Activated CD8-positive, alpha-beta T cell treated with anti-CD3 and anti-CD28 coated beads, Interleukin-2, amount 10 ng/mL, durations not matched to agents 7 days and 5 days (primary cell): ENCODE measurements at regions of chr9 and their contacts with region 1.

Region 1: DNA sequence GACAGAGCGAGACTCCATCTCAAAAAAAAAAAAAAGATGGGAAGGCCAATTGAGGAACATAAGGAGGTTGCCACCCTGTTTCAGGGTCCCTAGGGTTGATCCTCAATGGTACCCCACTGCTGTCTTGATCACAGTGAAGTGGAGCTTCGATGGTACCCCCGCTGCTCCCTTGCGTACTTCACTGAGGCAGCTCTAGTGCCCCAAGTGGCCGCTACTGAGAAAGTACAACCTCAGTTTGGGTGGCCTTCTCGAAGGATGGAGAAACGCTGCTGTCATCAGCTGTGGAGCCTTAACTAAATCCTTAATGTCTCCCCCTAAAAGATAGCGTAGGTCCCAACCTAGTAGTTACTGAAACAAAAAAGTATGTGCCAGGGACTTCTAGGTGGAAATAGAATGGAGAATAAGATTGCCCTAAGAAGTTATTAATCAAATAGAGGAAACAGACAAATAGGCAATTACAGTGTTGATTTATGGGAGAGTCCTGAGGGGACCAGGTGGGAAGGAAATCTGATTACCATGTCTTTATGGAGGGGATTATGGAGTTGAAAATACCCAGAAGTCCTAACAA is 6.3 kb downstream of the TESK1 start:
- DNase-seq: peak; percentile 73
- ATAC-seq: peak; percentile 87
- H3K4me3 Mint-ChIP-seq: no peak overlapping the region
- H3K27ac Mint-ChIP-seq: no peak overlapping the region
- H3K4me1 Mint-ChIP-seq: peaks cover 30% of the 10 kb centered on the region
- H3K27me3 Mint-ChIP-seq: no peaks in the 10 kb centered on the region

Region 2: DNA sequence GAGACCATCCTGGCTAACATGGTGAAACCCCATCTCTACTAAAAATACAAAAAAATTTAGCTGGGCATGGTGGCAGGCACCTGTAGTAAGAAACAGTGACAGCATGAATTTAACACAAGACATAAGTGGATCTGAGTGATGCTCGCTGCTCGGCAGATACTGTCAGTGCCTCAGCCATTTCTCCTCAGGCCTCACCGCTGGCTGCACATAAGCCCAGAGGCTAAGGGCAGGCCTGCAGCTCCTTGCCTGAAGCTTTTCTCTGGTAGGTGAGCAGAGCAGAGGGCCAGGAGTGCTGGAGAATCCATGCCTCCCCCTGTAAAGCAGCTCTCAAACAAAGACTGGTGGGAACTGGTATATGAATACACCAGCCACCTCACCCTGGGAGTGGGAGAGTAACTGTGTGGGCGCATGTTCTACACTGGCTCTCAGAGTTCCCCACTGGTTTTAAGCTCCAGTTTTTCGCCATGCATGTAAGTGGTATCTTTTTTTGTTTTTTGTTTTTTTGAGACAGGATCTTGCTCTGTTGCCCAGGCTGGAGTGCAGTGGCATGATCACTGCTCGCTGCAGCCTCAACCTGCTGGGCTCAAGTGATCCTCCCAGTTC is 17.2 kb after region 1 on chr9:
- CTCF ChIA-PET with region 1: interaction called, 12 read pairs
- POLR2A ChIA-PET with region 1: no interaction called
- DNase-seq: no peak
- ATAC-seq: no peak
- H3K4me3 Mint-ChIP-seq: no peak overlapping the region
- H3K27ac Mint-ChIP-seq: no peak overlapping the region
- H3K4me1 Mint-ChIP-seq: peaks cover 16% of the 10 kb centered on the region
- H3K27me3 Mint-ChIP-seq: no peaks in the 10 kb centered on the region

Region 3: GRCh38 chr9:35636135-35636876 is 25.0 kb after region 1 on chr9:
- CTCF ChIA-PET with region 1: interaction called, 37 read pairs
- POLR2A ChIA-PET with region 1: interaction called, 5 read pairs
- DNase-seq: no peak
- ATAC-seq: no peak
- H3K4me3 Mint-ChIP-seq: no peak overlapping the region
- H3K27ac Mint-ChIP-seq: no peak overlapping the region
- H3K4me1 Mint-ChIP-seq: peaks cover 56% of the 10 kb centered on the region
- H3K27me3 Mint-ChIP-seq: no peaks in the 10 kb centered on the region

Region 4: DNA sequence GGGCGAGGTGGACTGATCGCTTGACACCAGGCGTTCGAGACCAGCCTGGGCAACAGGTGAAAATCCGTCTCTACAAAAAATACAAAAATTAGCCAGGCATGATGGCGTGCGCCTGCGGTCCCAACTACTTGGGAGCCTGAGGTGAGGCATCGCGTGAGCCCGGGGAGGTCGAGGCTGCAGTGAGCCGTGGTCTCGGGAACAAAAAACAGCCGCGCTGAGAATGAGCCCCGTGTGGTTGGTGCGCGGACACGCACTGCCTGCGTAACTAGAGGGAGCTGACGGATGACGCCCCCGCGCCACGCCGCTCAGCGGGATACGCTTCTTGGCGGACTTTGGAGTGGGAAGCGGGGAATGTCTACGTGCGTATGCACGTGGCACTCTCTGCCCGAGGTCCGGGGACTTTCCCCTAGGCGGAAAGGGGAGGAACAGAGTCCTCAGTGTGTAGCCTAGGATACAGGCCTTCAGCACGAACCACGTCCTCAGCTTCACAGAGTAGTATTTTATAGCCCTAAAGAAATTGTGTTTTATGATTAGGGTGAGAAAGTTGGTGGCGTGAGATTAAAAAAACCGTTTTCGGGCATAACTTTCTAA is 46.3 kb after region 1 on chr9 and contains the start of gene RMRP:
- CTCF ChIA-PET with region 1: interaction called, 272 read pairs
- POLR2A ChIA-PET with region 1: interaction called, 6 read pairs
- DNase-seq: peak; percentile 94
- ATAC-seq: peak; percentile 92
- H3K4me3 Mint-ChIP-seq: peak within 1 kb of the TSS; percentile 92
- H3K27ac Mint-ChIP-seq: peak within 1 kb of the TSS; percentile 97
- H3K4me1 Mint-ChIP-seq: peaks cover 62% of the 10 kb centered on the region
- H3K27me3 Mint-ChIP-seq: peaks cover 3% of the 10 kb centered on the region
- total RNA-seq, gene RMRP: 7,126 to 12,592 TPM

Region 5: DNA sequence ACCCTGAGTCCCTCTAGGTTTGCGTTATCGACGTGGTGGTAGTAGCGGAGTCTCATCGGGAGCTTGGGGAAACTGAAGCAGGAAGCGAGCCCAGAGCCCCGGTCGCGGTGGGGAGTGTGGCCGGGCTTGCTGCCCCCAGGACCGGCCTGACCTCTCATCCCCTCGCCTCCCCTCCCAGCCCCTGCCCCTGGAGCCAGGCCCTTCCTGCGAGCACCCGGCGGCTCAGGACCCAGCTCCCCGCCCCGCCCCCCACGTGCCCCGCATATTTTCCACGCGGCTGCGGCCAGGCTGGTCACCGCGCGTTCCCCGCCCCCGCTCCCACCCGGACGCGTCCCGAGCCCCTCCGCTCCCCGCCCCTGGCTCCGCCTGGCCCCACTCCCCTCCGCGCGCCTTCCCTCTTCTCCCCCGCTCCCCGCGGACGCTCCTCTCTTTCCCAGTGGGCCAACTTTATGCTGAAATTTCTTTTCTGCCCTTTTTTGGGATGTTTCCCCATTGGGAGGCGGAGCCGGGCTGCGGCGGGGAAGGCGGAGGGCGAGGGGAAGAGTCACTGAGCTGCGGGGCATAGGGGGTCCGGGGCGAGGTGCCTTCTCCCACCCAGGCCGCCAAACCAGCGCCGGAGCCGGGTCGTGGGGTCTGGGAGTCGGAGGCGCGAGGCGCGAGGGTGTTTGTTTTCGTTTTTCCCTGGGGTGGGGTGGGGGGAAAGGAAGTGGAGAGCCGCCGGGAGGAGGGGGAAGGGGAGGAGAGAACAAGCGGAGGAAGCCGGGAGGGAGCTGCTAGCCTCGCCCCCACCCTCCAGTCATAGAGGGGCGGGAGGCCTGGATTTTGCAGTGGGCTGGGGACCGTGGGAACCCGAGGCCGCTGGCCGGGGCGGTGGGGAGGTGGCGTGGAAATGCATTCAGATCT is 79.4 kb after region 1 on chr9:
- CTCF ChIA-PET with region 1: interaction called, 52 read pairs
- POLR2A ChIA-PET with region 1: no interaction called
- DNase-seq: peak; percentile 39
- ATAC-seq: peak; percentile 63
- H3K4me3 Mint-ChIP-seq: peak overlapping the region; percentile 77
- H3K27ac Mint-ChIP-seq: peak overlapping the region; percentile 67
- H3K4me1 Mint-ChIP-seq: peaks cover 34% of the 10 kb centered on the region
- H3K27me3 Mint-ChIP-seq: no peaks in the 10 kb centered on the region

Region 6: DNA sequence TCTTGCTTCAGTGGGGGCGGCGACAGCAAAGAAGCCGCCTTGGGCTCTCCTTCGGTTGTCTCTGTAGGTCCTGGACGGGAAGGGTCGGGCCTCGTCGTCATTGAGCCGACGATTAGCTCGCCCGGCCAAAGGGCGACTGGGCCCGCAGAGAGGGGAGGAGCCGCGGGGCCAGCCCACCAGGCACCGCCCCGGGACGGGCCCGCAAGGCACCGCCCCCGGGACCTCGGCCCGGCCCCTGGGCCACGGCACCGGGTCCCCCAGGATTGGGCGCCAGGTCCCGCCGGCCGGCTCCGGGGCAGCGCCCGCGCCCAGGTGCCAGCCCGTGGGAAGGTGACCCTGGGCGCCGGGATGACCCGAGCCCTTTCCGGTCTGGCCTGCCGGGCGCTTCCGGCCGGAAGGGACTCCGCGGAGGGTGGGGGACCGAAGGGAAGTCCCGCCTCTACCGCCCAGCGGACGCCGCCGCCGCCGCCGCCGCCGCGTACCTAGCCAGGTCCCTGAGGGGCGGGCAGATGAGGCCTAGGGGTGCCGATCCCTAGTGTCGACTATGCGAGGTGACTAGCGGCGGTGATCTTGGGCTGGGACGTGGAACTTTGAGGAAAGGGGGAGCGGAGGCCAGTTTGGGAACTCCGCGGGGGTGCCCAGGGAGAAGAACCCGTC is 137.7 kb after region 1 on chr9 and contains the starts of genes GBA2 and RGP1:
- CTCF ChIA-PET with region 1: interaction called, 10 read pairs
- POLR2A ChIA-PET with region 1: interaction called, 3 read pairs
- DNase-seq: peak; percentile 78
- ATAC-seq: peak; percentile 83
- H3K4me3 Mint-ChIP-seq: peak within 1 kb of the TSS; percentile 90
- H3K27ac Mint-ChIP-seq: peak within 1 kb of the TSS; percentile 87
- H3K4me1 Mint-ChIP-seq: peaks cover 39% of the 10 kb centered on the region
- H3K27me3 Mint-ChIP-seq: no peaks in the 10 kb centered on the region
- total RNA-seq, gene GBA2: 52.6 to 56.4 TPM
- total RNA-seq, gene RGP1: 22.1 to 22.9 TPM

Region 7: GRCh38 chr9:36064448-36065037 is 453.2 kb after region 1 on chr9:
- CTCF ChIA-PET with region 1: no interaction called
- POLR2A ChIA-PET with region 1: no interaction called
- DNase-seq: no peak
- ATAC-seq: no peak
- H3K4me3 Mint-ChIP-seq: no peak overlapping the region
- H3K27ac Mint-ChIP-seq: no peak overlapping the region
- H3K4me1 Mint-ChIP-seq: no peaks in the 10 kb centered on the region
- H3K27me3 Mint-ChIP-seq: no peaks in the 10 kb centered on the region